ENCODE measurements at regions of chr4 and their contacts with region 1.

Region 1: GRCh38 chr4:173420324-173420752 is 21.4 kb upstream of the SCRG1 start:
- DNase-seq: peak; percentile 34
- H3K4me3 ChIP-seq: no peak overlapping the region
- H3K27ac ChIP-seq: peak overlapping the region in 1 of 2 experiments; percentile 56; a peak in 2 of 4 replicates
- H3K4me1 ChIP-seq: peaks cover 0 to under 1% of the 10 kb centered on the region in 2 experiments; a peak in 1 of 4 replicates
- H3K27me3 ChIP-seq: no peaks in the 10 kb centered on the region
- CTCF ChIP-seq: peak; percentile 69
- EP300 ChIP-seq: no peak
- RAD21 ChIP-seq: peak; percentile 78

Region 2: GRCh38 chr4:173318648-173319211 is 101.6 kb before region 1 on chr4:
- CTCF ChIA-PET with region 1: interaction called, 82 read pairs
- POLR2A ChIA-PET with region 1: no interaction called
- DNase-seq: peak; percentile 18
- H3K4me3 ChIP-seq: no peak overlapping the region
- H3K27ac ChIP-seq: peak overlapping the region in 1 of 2 experiments; percentile 37; a peak in 3 of 4 replicates
- H3K4me1 ChIP-seq: peaks cover 0 to 21% of the 10 kb centered on the region in 2 experiments; a peak in 3 of 4 replicates
- H3K27me3 ChIP-seq: no peaks in the 10 kb centered on the region
- CTCF ChIP-seq: peak; percentile 50
- EP300 ChIP-seq: no peak
- RAD21 ChIP-seq: peak; percentile 68

Region 3: GRCh38 chr4:173403051-173403450 is 17.3 kb before region 1 on chr4:
- CTCF ChIA-PET with region 1: interaction called, 12 read pairs
- POLR2A ChIA-PET with region 1: no interaction called
- DNase-seq: no peak
- H3K4me3 ChIP-seq: no peak overlapping the region
- H3K27ac ChIP-seq: no peak overlapping the region
- H3K4me1 ChIP-seq: peaks cover 0 to 3% of the 10 kb centered on the region in 2 experiments; a peak in 1 of 4 replicates
- H3K27me3 ChIP-seq: no peaks in the 10 kb centered on the region
- CTCF ChIP-seq: no peak
- EP300 ChIP-seq: no peak
- RAD21 ChIP-seq: no peak

Region 4: GRCh38 chr4:173432430-173432829 is 12.1 kb after region 1 on chr4:
- CTCF ChIA-PET with region 1: interaction called, 15 read pairs
- POLR2A ChIA-PET with region 1: no interaction called
- DNase-seq: no peak
- H3K4me3 ChIP-seq: no peak overlapping the region
- H3K27ac ChIP-seq: no peak overlapping the region
- H3K4me1 ChIP-seq: peaks cover 8 to 12% of the 10 kb centered on the region in 2 experiments; a peak in 3 of 4 replicates
- H3K27me3 ChIP-seq: no peaks in the 10 kb centered on the region
- CTCF ChIP-seq: no peak
- EP300 ChIP-seq: no peak
- RAD21 ChIP-seq: no peak

Region 5: GRCh38 chr4:173478201-173478912 is 58.0 kb after region 1 on chr4:
- CTCF ChIA-PET with region 1: interaction called, 10 read pairs
- POLR2A ChIA-PET with region 1: interaction called, 3 read pairs
- DNase-seq: no peak
- H3K4me3 ChIP-seq: no peak overlapping the region
- H3K27ac ChIP-seq: peak overlapping the region; percentile 9 to 39; a peak in 2 of 4 replicates
- H3K4me1 ChIP-seq: peaks cover 3 to 15% of the 10 kb centered on the region in 2 experiments
- H3K27me3 ChIP-seq: no peaks in the 10 kb centered on the region
- CTCF ChIP-seq: no peak
- EP300 ChIP-seq: 0 out of 4 replicates have a peak, but pooled peaks of 1 of the 2 experiments have one; percentile 20
- RAD21 ChIP-seq: no peak

Region 6: GRCh38 chr4:173516621-173517524 is 96.5 kb after region 1 on chr4:
- CTCF ChIA-PET with region 1: interaction called, 9 read pairs
- POLR2A ChIA-PET with region 1: interaction called, 18 read pairs
- DNase-seq: peak; percentile 70
- H3K4me3 ChIP-seq: peak overlapping the region; percentile 50 to 58
- H3K27ac ChIP-seq: peak overlapping the region; percentile 99
- H3K4me1 ChIP-seq: peaks cover 20 to 45% of the 10 kb centered on the region in 2 experiments
- H3K27me3 ChIP-seq: no peaks in the 10 kb centered on the region
- CTCF ChIP-seq: peak; percentile 29
- EP300 ChIP-seq: no peak
- RAD21 ChIP-seq: 0 out of 2 replicates have a peak, but pooled peaks have one; percentile 14

Region 7: GRCh38 chr4:173883821-173884220 is 463.5 kb after region 1 on chr4:
- CTCF ChIA-PET with region 1: no interaction called
- POLR2A ChIA-PET with region 1: no interaction called
- DNase-seq: no peak
- H3K4me3 ChIP-seq: no peak overlapping the region
- H3K27ac ChIP-seq: no peak overlapping the region
- H3K4me1 ChIP-seq: peaks cover under 1 to 5% of the 10 kb centered on the region in 2 experiments; a peak in 3 of 4 replicates
- H3K27me3 ChIP-seq: no peaks in the 10 kb centered on the region
- CTCF ChIP-seq: no peak
- EP300 ChIP-seq: no peak
- RAD21 ChIP-seq: no peak

Measured in SK-N-SH (cell line).